HEK293 (cell line): ENCODE measurements at regions of chr11 and their contacts with region 1.

Region 1: DNA sequence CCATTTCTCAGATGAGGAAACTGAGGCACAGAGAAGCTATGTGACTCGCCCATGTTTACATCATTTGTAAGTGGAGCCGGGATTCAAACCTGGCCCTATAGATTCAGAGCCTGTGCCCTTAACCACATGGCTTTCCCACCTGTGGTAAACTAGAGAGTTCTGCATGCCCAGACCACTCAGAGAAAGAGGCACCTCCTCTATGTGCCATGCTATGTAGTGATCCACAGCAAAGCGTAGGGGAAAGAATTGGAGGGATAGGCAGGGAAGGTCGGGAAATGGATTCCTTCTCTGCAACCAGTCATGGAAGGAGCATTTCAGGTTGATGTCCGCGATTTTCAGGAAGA is 15.4 kb upstream of the POU2AF2 start:
- H3K4me3 ChIP-seq: no peak overlapping the region
- H3K27ac ChIP-seq: no peak overlapping the region
- H3K4me1 ChIP-seq: no peaks in the 10 kb centered on the region
- CTCF ChIP-seq: no peak

Region 2: GRCh38 chr11:110467556-110467955 is 762.5 kb before region 1 on chr11:
- CTCF ChIA-PET with region 1: interaction called, 15 read pairs
- POLR2A ChIA-PET with region 1: no interaction called
- H3K4me3 ChIP-seq: no peak overlapping the region
- H3K27ac ChIP-seq: no peak overlapping the region
- H3K4me1 ChIP-seq: no peaks in the 10 kb centered on the region
- CTCF ChIP-seq: no peak